Activated CD4-positive, alpha-beta memory T cell treated with anti-CD3 and anti-CD28 coated beads, Interleukin-2, amount 10 ng/mL, durations not matched to agents 7 days and 5 days (primary cell): ENCODE measurements at regions of chrX and their contacts with region 1.

Region 1: GRCh38 chrX:132631579-132632232 is 142.9 kb upstream of the MBNL3 start:
- DNase-seq: no peak
- H3K4me3 Mint-ChIP-seq: no peak overlapping the region
- H3K27ac Mint-ChIP-seq: no peak overlapping the region
- H3K4me1 Mint-ChIP-seq: no peaks in the 10 kb centered on the region
- H3K27me3 Mint-ChIP-seq: no peaks in the 10 kb centered on the region

Region 2: DNA sequence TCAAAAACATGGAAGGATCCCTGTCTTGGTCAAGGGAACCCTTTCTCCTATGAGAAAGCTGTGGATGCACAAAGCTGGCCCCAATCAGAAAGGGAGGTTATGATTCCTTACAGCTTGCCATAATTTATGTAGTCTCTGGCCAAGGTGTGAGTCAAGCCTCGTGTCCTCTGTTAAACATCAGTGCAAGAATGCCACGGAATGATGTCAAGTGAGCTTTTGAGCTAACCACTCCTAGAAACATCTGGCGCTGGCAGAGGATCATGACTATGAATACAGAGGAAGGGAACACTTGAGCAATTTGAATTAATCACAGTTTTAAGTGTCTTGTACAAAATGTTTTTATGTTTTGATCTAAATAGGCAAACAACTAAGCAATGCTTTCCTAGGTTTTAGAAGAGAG is 361.0 kb before region 1 on chrX:
- CTCF ChIA-PET with region 1: no interaction called
- POLR2A ChIA-PET with region 1: no interaction called
- DNase-seq: no peak
- H3K4me3 Mint-ChIP-seq: no peak overlapping the region
- H3K27ac Mint-ChIP-seq: no peak overlapping the region
- H3K4me1 Mint-ChIP-seq: peaks cover 6% of the 10 kb centered on the region
- H3K27me3 Mint-ChIP-seq: no peaks in the 10 kb centered on the region

Region 3: GRCh38 chrX:132292793-132293192 is 338.9 kb before region 1 on chrX:
- CTCF ChIA-PET with region 1: interaction called, 16 read pairs
- POLR2A ChIA-PET with region 1: no interaction called
- DNase-seq: peak; percentile 18
- H3K4me3 Mint-ChIP-seq: no peak overlapping the region
- H3K27ac Mint-ChIP-seq: no peak overlapping the region
- H3K4me1 Mint-ChIP-seq: peaks cover 6% of the 10 kb centered on the region
- H3K27me3 Mint-ChIP-seq: no peaks in the 10 kb centered on the region

Region 4: DNA sequence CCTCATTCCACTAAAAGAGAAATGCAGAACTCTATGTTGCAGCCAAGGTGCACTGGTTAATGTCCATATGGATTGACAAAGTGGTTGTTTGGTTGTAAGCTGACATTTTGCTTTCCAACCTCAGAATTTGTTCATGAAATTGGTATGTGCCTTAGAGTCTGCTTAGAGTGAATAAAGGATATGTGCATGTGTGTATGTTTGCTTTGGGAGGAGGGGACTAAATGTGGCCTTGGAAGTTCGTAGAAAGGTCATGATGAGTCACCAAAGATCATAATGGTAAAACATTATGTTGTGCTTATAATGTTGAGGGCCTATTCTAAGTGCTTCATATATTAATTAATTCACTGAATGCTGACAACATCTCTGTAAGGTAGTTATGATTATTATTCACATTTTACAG is 98.8 kb before region 1 on chrX:
- CTCF ChIA-PET with region 1: no interaction called
- POLR2A ChIA-PET with region 1: no interaction called
- DNase-seq: no peak
- H3K4me3 Mint-ChIP-seq: no peak overlapping the region
- H3K27ac Mint-ChIP-seq: no peak overlapping the region
- H3K4me1 Mint-ChIP-seq: peaks cover 2% of the 10 kb centered on the region
- H3K27me3 Mint-ChIP-seq: peaks cover 6% of the 10 kb centered on the region

Region 5: DNA sequence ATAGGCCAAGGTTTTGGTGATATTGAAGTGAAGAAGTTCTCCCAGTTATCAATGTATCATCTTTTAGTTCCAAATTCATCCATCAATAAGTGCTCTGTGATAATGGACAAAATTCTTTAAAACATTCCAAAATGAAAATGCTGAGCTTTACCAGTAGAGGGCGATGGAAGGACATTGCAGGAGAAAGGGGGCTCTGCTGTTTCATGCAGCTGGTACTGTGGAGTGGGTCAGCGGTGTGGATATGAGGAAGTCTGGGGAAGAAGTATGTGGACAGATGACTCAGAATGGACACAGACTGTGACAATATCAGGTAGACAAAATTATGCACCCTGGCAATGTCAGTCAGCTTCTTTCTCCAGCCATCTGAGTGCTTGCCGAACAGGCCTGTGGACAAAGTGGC is 373.4 kb after region 1 on chrX:
- CTCF ChIA-PET with region 1: no interaction called
- POLR2A ChIA-PET with region 1: no interaction called
- DNase-seq: no peak
- H3K4me3 Mint-ChIP-seq: no peak overlapping the region
- H3K27ac Mint-ChIP-seq: no peak overlapping the region
- H3K4me1 Mint-ChIP-seq: no peaks in the 10 kb centered on the region
- H3K27me3 Mint-ChIP-seq: no peaks in the 10 kb centered on the region